ENCODE measurements at regions of chr12 and their contacts with region 1.

Region 1: GRCh38 chr12:4164559-4165558 is 108.7 kb upstream of the CCND2 start:
- DNase-seq: peak; percentile 77
- ATAC-seq: peak; percentile 88
- H3K4me3 Mint-ChIP-seq: peak overlapping the region; percentile 67
- H3K27ac Mint-ChIP-seq: peak overlapping the region; percentile 64
- H3K4me1 Mint-ChIP-seq: peaks cover 40% of the 10 kb centered on the region
- H3K27me3 Mint-ChIP-seq: peaks cover 20% of the 10 kb centered on the region
- CTCF ChIP-seq: no peak

Region 2: DNA sequence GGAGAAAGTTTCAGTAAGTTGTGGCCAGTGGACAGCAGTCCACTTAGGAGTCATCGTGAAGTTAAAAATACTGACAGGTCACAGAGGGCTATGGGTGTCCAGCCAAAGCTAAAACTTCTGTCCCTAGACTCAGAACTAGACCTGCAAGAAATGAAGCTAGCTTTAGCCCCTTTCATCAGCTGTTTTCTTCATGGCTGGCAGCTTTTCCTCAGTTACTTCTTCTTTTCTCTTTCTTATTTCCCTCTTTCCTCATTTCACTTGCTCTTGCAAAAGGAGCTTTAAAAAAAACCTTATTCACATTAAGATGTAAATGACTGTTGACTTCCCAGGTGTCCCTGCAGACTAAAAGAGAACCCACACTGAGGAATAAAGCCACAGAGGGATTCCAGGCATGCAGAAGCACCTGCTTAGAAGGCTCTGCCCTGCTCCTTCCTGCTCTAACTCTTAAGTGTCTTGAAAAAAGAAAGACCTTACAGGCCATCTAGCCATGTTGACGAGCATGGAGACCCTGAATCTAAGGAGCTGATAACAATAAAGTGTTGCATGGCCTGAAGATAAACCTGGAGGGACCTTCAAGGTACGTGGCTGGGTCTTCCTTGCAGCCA is 39.0 kb after region 1 on chr12:
- CTCF ChIA-PET with region 1: no interaction called
- POLR2A ChIA-PET with region 1: interaction called, 13 read pairs
- DNase-seq: no peak
- ATAC-seq: peak; percentile 94
- H3K4me3 Mint-ChIP-seq: peak overlapping the region; percentile 51
- H3K27ac Mint-ChIP-seq: peak overlapping the region; percentile 57
- H3K4me1 Mint-ChIP-seq: peaks cover 70% of the 10 kb centered on the region
- H3K27me3 Mint-ChIP-seq: no peaks in the 10 kb centered on the region
- CTCF ChIP-seq: no peak

Measured in WTC11 (cell line).